Transverse colon (tissue), 4 donors: ENCODE measurements at regions of chr1 and their contacts with region 1.

Region 1: GRCh38 chr1:44213222-44214112 is at the start of gene DMAP1:
- DNase-seq: peak; percentile 87
- H3K4me3 ChIP-seq: peak within 1 kb of the TSS; percentile 66 to 88 (median 80)
- H3K27ac ChIP-seq: peak within 1 kb of the TSS; percentile 70 to 88 (median 84)
- H3K4me1 ChIP-seq: peaks cover 5 to 22% (median 21%) of the 10 kb centered on the region in 4 donors
- H3K27me3 ChIP-seq: no peaks in the 10 kb centered on the region
- CTCF ChIP-seq: peak in 2 of 5 experiments; percentile 23 to 34
- EP300 ChIP-seq: no peak
- POLR2A ChIP-seq: no peak
- total RNA-seq, gene DMAP1: 57.8 to 130 (median 93.6) TPM

Region 2: DNA sequence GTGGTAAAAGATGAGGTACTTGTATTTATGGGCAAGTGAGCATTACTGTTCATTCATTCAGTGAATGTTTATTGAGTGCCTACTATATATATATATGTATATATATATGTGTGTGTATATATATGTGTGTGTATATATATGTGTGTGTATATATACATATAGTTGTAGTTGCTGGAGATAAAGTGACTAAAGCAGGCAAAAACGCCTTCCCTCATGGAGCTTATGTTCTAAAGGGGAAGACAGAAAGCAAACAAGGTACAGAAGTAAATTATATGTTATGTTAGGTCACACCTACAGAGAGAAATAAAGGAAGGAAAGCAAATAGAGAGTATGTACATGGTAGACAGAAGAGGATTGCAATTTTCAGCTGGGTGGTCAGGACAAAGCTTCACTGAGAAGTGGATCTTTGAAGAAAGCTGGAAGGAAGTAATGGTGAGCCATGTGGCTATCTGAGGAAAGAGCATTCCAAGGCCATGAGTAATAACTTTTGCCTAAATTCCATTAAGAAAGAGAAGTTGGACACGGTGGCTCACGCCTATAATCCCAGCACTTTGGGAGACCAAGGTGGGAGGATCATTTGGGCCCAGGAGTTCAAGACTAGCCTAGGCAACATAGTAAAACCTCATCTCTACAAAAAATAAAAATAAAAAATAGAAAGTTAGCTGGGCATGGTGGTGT is 128.3 kb before region 1 on chr1:
- in situ Hi-C with region 1: no loop called
- intact Hi-C with region 1: no loop called
- DNase-seq: no peak
- H3K4me3 ChIP-seq: no peak overlapping the region
- H3K27ac ChIP-seq: no peak overlapping the region
- H3K4me1 ChIP-seq: peaks cover 0 to 3% (median 0%) of the 10 kb centered on the region in 4 donors
- H3K27me3 ChIP-seq: no peaks in the 10 kb centered on the region
- CTCF ChIP-seq: no peak
- EP300 ChIP-seq: no peak
- POLR2A ChIP-seq: no peak

Region 3: DNA sequence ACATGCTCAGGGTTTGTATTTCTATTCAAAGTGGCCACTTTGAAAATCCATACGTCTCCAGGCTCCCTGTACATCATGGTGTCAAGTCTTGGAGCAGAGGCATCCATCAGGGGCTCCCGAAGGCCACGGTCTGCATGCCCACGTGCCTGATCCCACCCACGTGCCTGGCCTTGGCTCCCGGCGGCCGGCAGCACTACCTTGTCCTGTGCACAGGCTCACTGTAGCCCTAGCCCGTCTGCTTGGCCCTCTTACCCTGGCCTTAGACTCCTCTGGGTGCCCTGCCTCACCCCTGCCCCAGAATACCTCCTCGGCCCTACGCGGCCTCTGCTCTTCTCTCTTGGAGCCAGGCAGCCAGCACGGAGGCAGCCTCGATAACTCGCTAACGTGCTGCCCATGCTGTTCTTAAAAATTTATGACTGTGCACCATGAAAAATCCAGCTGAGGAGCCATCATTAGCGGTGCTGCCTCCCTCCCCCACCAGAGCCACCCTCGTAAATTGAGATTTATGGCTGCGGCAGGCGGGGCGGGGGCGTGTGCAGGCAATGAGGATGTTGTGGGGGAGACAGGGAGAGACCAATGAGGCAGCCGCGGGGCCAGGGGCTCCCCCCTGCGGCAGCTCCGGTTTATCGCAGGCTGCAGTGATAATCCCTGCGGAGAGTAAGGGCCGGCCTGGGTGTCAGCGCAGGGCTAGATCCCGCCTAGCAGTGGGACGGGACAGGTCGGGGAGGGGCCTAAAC is 24.4 kb after region 1 on chr1:
- in situ Hi-C with region 1: no loop called
- intact Hi-C with region 1: no loop called
- DNase-seq: peak; percentile 89
- H3K4me3 ChIP-seq: no peak overlapping the region
- H3K27ac ChIP-seq: peak overlapping the region; percentile 71 to 89 (median 83)
- H3K4me1 ChIP-seq: peaks cover 43 to 50% (median 45%) of the 10 kb centered on the region in 4 donors
- H3K27me3 ChIP-seq: no peaks in the 10 kb centered on the region
- CTCF ChIP-seq: peak; percentile 69 to 87 (median 79)
- EP300 ChIP-seq: peak; percentile 25
- POLR2A ChIP-seq: no peak

Region 4: DNA sequence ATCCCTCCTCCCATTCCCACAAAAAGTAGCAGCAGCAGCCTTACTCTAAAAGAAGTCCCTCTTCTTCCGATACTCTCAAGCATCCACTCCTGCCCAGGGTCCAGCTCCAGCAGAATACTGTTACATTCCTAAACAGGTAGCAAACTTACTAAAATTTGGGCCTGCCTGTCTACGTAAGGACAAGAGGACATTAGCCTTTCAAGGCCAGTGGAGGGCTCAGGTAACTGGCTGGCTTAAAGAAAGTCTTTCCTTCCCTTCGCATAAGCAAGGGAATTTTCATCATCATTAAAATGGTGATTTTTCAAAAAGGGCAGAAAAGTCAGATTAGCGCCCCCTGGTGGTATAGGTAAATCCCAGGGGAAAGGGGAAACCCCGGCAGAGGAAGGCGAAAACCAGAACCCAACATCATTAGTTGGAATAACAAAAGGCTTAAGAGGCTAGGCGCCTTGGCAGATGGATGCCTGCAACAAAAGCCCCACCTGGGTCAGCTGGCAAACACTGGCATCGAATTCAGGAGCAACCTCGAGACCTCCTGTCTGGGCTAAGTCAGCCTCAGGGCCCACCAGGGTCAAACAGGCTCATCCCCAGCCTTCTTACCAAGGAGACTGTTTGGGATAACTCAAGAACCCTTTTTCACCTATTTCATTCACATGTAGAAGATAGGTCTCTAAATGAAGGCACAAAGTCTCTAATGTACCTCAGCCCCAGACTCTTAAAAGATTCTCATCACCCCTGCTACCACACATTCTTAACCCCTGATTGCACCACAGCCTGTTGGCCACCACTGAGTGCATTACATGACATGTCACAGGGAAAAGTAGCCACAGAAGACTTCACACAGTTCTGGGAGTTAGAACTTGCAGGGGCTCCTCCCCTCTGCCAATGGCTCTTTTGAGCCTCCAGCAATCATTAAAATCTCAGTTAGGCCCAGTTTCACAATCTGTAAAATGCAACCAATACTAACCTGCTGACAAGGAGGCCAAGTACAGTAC is 104.9 kb after region 1 on chr1:
- in situ Hi-C with region 1: loop called in 3 of 4 experiments (anchors 10 to 25 kb)
- intact Hi-C with region 1: loop called (anchors 5 kb)
- DNase-seq: peak; percentile 39
- H3K4me3 ChIP-seq: no peak overlapping the region
- H3K27ac ChIP-seq: no peak overlapping the region
- H3K4me1 ChIP-seq: no peaks in the 10 kb centered on the region
- H3K27me3 ChIP-seq: no peaks in the 10 kb centered on the region
- CTCF ChIP-seq: peak; percentile 74 to 89 (median 86)
- EP300 ChIP-seq: no peak
- POLR2A ChIP-seq: no peak

Region 5: DNA sequence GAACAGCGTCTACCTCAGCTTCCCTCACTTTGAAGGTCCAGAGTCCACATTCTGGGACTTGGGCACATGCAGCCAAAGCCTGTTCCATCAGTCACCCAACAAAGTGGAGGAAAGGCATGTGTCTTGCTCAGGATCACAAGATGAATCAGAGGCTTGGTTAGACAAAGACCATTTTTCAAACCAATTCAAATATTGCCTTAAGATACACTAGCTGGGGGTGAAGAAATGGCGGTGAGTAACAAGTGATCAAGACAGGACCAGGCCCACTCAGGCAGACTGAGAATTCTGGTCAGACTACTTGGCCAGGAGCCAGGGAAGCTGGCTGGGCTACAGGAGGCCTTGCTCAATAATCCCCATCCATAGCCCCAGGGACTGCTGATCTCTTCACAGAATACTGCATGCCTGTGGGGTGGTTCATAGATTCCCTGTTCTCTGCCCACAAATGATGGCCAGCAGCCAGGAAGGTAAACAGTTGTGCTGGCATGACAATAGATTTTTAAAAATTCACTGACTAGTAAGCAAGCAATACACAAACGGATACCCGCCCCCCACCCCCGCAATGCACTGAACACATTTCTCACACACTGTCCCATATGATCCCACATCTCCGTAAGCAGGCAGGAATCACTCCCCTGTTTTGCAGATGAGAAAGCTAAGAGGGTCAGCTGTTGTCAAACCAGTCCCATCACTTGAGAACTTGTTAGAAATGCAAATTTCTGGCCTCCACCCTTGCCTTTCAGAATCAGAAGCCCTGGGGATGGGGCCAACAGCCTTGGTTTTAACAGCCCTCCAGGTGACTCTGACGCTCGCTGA is 114.4 kb after region 1 on chr1:
- in situ Hi-C with region 1: loop called in 2 of 4 experiments (anchors 10 to 25 kb)
- intact Hi-C with region 1: no loop called
- DNase-seq: peak; percentile 68
- H3K4me3 ChIP-seq: no peak overlapping the region
- H3K27ac ChIP-seq: peak overlapping the region in 2 of 4 donors; percentile 8 to 19
- H3K4me1 ChIP-seq: peaks cover 0 to 16% (median 0%) of the 10 kb centered on the region in 4 donors
- H3K27me3 ChIP-seq: no peaks in the 10 kb centered on the region
- CTCF ChIP-seq: no peak
- EP300 ChIP-seq: no peak
- POLR2A ChIP-seq: no peak

Region 6: GRCh38 chr1:44594871-44595746 is 381.6 kb after region 1 on chr1:
- in situ Hi-C with region 1: loop called in 2 of 4 experiments (anchors 25 kb)
- intact Hi-C with region 1: loop called (anchors 5 kb)
- DNase-seq: peak; percentile 85
- H3K4me3 ChIP-seq: no peak overlapping the region
- H3K27ac ChIP-seq: no peak overlapping the region
- H3K4me1 ChIP-seq: no peaks in the 10 kb centered on the region
- H3K27me3 ChIP-seq: peaks cover 77% of the 10 kb centered on the region
- CTCF ChIP-seq: peak; percentile 92 to 98 (median 97)
- EP300 ChIP-seq: no peak
- POLR2A ChIP-seq: no peak